SK-MEL-5 (cell line): ENCODE measurements at regions of chr3 and their contacts with region 1.

Region 1: DNA sequence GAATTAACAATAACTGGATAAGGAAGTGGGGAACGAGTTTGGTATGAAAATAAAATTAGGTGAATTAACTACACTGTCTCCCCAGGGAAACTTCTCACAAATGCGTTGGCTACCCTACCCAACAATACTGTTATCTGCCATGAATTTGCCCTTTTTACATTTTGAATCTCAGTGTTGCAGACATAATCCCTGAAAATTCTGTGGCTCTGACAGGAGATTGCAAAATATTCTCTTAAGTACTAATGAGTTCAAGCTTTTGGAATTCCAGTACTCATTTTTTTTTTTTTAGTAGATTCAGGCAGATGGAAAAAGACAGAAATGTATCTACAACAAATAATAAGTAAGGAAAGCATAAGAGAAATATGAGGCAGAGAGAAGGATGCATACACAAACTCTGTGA is 332.6 kb downstream of the LSAMP start:
- DNase-seq: no peak

Region 2: GRCh38 chr3:115602194-115602593 is 510.5 kb before region 1 on chr3:
- in situ Hi-C with region 1: no loop called
- DNase-seq: no peak

Region 3: GRCh38 chr3:116770815-116771450 is 658.2 kb after region 1 on chr3:
- in situ Hi-C with region 1: loop called (anchors 25 kb)
- DNase-seq: peak; percentile 90